ENCODE measurements at regions of chr7 and their contacts with region 1.

Region 1: DNA sequence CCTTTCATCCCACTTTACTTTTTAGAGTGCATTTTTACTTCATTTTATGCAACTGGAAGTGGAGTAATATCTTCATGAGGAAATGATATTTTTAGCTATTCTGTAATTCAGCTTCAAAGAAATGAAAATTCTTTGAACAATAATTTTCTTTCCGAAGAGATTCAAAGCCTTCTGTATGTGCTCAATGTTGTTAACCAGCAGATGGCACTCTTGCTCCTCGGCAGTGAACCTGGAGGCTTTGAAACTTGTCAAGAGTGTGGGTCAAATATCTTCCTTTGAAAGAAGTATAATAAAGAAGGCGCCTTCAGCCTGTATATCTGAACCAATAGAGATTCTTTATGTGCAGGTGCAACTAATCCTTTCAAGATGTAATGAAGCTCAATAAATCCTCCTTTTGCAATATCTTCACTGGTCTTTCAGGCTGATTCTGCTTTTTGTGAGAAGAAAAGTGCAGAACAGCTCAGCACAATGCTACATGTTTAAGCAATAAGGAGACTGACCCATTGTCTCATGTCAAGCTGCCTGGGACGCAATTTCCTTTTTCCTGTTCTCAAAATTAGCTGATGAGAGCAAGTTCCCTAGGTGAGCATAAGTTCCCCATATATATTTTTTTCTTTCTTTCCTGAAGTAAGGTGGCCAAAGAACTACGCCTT is 258.4 kb downstream of the SEMA3A start:
- DNase-seq: peak; percentile 68
- ATAC-seq: peak; percentile 60
- H3K4me3 Mint-ChIP-seq: no peak overlapping the region
- H3K27ac Mint-ChIP-seq: no peak overlapping the region
- H3K4me1 Mint-ChIP-seq: no peaks in the 10 kb centered on the region
- H3K27me3 Mint-ChIP-seq: no peaks in the 10 kb centered on the region
- CTCF ChIP-seq: peak; percentile 83

Region 2: GRCh38 chr7:83849131-83849530 is 87.1 kb before region 1 on chr7:
- CTCF ChIA-PET with region 1: no interaction called
- POLR2A ChIA-PET with region 1: no interaction called
- intact Hi-C with region 1: no loop called
- DNase-seq: no peak
- ATAC-seq: no peak
- H3K4me3 Mint-ChIP-seq: no peak overlapping the region
- H3K27ac Mint-ChIP-seq: no peak overlapping the region
- H3K4me1 Mint-ChIP-seq: no peaks in the 10 kb centered on the region
- H3K27me3 Mint-ChIP-seq: no peaks in the 10 kb centered on the region
- CTCF ChIP-seq: no peak

Region 3: GRCh38 chr7:83947260-83947659 is 11.1 kb after region 1 on chr7:
- CTCF ChIA-PET with region 1: interaction called, 18 read pairs
- POLR2A ChIA-PET with region 1: no interaction called
- intact Hi-C with region 1: no loop called
- DNase-seq: peak; percentile 15
- ATAC-seq: peak; percentile 60
- H3K4me3 Mint-ChIP-seq: no peak overlapping the region
- H3K27ac Mint-ChIP-seq: no peak overlapping the region
- H3K4me1 Mint-ChIP-seq: no peaks in the 10 kb centered on the region
- H3K27me3 Mint-ChIP-seq: peaks cover 3% of the 10 kb centered on the region
- CTCF ChIP-seq: peak; percentile 20

Region 4: GRCh38 chr7:83957333-83957732 is 21.2 kb after region 1 on chr7:
- CTCF ChIA-PET with region 1: interaction called, 11 read pairs
- POLR2A ChIA-PET with region 1: no interaction called
- intact Hi-C with region 1: no loop called
- DNase-seq: no peak
- ATAC-seq: no peak
- H3K4me3 Mint-ChIP-seq: no peak overlapping the region
- H3K27ac Mint-ChIP-seq: no peak overlapping the region
- H3K4me1 Mint-ChIP-seq: no peaks in the 10 kb centered on the region
- H3K27me3 Mint-ChIP-seq: peaks cover 2% of the 10 kb centered on the region
- CTCF ChIP-seq: no peak

Region 5: GRCh38 chr7:85023045-85023712 is 1087.0 kb after region 1 on chr7:
- CTCF ChIA-PET with region 1: interaction called, 12 read pairs
- POLR2A ChIA-PET with region 1: no interaction called
- intact Hi-C with region 1: no loop called
- DNase-seq: peak; percentile 21
- ATAC-seq: no peak
- H3K4me3 Mint-ChIP-seq: no peak overlapping the region
- H3K27ac Mint-ChIP-seq: no peak overlapping the region
- H3K4me1 Mint-ChIP-seq: no peaks in the 10 kb centered on the region
- H3K27me3 Mint-ChIP-seq: peaks cover 3% of the 10 kb centered on the region
- CTCF ChIP-seq: peak; percentile 53